Activated CD4-positive, alpha-beta T cell treated with anti-CD3 and anti-CD28 coated beads, Interleukin-2, amount 10 ng/mL, durations not matched to agents 7 days and 5 days (primary cell): ENCODE measurements at regions of chr13 and their contacts with region 1.

Region 1: GRCh38 chr13:102800145-102801041 is 1.5 kb downstream of the BIVM start:
- DNase-seq: peak; percentile 86
- H3K4me3 Mint-ChIP-seq: peak overlapping the region; percentile 81
- H3K27ac Mint-ChIP-seq: peak overlapping the region; percentile 87
- H3K4me1 Mint-ChIP-seq: peaks cover 39% of the 10 kb centered on the region
- H3K27me3 Mint-ChIP-seq: peaks cover 5% of the 10 kb centered on the region

Region 2: GRCh38 chr13:102773441-102774215 is 26.8 kb before region 1 on chr13 and contains the start of gene TEX30:
- CTCF ChIA-PET with region 1: interaction called, 21 read pairs
- POLR2A ChIA-PET with region 1: interaction called, 3 read pairs
- DNase-seq: peak; percentile 86
- H3K4me3 Mint-ChIP-seq: peak within 1 kb of the TSS; percentile 88
- H3K27ac Mint-ChIP-seq: peak within 1 kb of the TSS; percentile 97
- H3K4me1 Mint-ChIP-seq: peaks cover 57% of the 10 kb centered on the region
- H3K27me3 Mint-ChIP-seq: peaks cover 2% of the 10 kb centered on the region
- total RNA-seq, gene TEX30: 30.3 to 32.9 TPM

Region 3: DNA sequence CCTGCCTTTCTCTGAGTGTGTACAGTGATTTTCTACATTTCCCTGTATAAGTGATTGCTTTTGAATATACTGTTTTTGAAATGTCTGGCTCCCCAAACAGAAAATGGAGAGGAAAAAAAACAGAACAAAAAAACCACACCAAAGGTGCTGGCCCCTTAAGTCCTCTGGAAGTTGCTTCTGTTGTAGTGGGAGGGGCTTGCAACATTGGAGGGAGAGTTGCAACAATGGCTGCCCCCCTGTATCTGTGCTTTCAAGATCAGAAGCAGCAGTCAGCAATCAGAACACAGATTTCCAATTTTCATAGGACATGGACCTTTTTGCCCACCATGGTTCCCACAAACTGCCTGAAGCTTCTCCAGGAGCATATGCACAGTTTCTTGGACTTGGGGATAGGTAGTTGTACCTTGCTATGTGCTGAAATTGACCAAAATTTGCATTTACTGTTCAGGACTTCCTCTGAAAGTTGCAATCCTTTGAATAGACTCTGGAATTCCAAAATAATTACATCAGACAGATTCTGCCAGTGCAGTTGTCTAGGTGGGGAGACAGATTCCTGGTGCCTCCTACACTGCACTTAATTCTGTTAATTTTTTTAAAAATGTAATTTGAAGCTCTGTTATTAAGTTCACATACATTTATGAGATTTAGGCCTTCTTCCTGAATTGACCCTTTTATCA is 12.4 kb after region 1 on chr13:
- CTCF ChIA-PET with region 1: interaction called, 16 read pairs
- POLR2A ChIA-PET with region 1: no interaction called
- DNase-seq: no peak
- H3K4me3 Mint-ChIP-seq: no peak overlapping the region
- H3K27ac Mint-ChIP-seq: no peak overlapping the region
- H3K4me1 Mint-ChIP-seq: peaks cover 27% of the 10 kb centered on the region
- H3K27me3 Mint-ChIP-seq: no peaks in the 10 kb centered on the region

Region 4: GRCh38 chr13:102868366-102868936 is 68.1 kb after region 1 on chr13:
- CTCF ChIA-PET with region 1: no interaction called
- POLR2A ChIA-PET with region 1: no interaction called
- DNase-seq: no peak
- H3K4me3 Mint-ChIP-seq: no peak overlapping the region
- H3K27ac Mint-ChIP-seq: no peak overlapping the region
- H3K4me1 Mint-ChIP-seq: peaks cover 12% of the 10 kb centered on the region
- H3K27me3 Mint-ChIP-seq: no peaks in the 10 kb centered on the region